HEK293T (cell line): ENCODE measurements at regions of chr16 and their contacts with region 1.

Region 1: DNA sequence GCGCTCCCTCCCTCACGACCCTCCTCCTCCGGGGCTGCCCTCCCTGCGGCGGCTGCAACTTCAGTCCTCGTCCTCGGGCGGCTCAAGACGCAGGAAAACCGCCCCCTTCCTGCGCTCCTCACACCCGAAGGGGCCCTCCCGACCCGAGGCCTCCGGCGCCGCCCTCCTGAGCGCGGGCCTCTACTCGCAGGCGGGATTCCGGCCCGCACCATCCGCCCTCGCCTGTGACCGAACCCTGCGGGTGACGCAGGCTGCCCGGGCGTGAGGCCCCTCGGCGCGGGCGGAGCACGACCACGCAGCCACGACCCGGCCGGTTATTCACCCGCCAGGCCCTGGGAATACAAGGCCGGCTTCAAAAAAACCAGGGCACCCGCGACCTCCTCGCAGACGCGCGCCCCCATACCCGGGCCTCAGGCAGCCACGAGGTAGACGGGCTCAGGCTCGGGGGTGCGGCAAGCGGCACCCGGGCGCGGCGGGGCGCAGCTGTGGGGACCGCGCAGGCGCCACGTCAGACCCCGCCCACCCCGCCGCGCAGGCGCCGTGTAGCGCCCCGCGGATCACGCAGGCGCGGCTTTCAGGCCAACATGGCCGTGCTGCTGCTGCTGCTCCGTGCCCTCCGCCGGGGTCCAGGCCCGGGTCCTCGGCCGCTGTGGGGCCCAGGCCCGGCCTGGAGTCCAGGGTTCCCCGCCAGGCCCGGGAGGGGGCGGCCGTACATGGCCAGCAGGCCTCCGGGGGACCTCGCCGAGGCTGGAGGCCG is at the start of gene SPG7:
- DNase-seq: peak; percentile 96

Region 2: DNA sequence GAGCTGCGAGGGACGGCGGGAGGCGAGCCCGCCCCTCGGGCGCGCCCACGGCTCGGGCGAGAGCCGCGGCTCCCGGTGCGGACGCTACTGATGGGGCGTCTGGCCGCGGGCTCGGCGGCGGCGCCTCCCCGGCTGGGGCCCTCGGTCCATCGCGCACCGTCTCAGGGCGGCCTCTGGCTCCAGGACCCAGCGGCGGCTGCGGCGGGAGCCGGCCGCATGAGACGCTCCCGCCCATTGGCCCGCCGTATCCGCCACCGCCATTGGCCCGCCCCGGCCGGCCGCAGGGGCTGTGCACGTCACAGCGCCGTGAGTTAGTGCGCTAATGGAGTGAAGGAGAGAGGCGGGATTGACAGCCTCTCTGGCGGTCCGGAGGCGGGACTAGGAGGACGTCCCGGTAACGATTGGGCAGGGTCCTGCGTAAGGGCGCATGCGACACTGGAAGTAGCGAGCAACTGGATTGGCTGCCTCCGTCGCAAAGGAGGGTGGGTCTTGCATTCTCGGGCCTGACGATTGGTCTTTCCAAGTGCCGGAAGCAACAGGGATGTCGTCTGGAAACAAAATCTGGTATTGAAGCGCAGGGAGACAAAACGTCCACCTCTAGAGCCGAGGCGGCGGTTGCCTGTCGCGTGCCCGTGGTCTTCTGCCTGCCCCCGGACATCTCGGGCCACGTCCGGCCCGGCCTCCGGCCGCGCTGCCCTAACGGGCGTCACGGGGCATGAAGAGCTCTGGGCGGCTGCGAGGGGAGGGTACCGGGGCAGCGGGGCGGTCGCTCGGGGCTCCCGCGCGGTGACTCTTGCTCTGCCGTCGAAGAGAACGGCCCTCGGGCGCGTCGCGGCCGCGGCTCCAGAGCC is 17.4 kb before region 1 on chr16 and contains the start of gene ANKRD11:
- CTCF ChIA-PET with region 1: no interaction called
- POLR2A ChIA-PET with region 1: interaction called, 11 read pairs
- DNase-seq: peak; percentile 99